ENCODE measurements at regions of chr6 and their contacts with region 1.

Region 1: GRCh38 chr6:4155848-4156466 is 20.6 kb upstream of the ECI2 start:
- DNase-seq: peak; percentile 75
- H3K4me3 Mint-ChIP-seq: no peak overlapping the region
- H3K27ac Mint-ChIP-seq: no peak overlapping the region
- H3K4me1 Mint-ChIP-seq: no peaks in the 10 kb centered on the region
- H3K27me3 Mint-ChIP-seq: peaks cover 26% of the 10 kb centered on the region
- CTCF ChIP-seq: no peak

Region 2: DNA sequence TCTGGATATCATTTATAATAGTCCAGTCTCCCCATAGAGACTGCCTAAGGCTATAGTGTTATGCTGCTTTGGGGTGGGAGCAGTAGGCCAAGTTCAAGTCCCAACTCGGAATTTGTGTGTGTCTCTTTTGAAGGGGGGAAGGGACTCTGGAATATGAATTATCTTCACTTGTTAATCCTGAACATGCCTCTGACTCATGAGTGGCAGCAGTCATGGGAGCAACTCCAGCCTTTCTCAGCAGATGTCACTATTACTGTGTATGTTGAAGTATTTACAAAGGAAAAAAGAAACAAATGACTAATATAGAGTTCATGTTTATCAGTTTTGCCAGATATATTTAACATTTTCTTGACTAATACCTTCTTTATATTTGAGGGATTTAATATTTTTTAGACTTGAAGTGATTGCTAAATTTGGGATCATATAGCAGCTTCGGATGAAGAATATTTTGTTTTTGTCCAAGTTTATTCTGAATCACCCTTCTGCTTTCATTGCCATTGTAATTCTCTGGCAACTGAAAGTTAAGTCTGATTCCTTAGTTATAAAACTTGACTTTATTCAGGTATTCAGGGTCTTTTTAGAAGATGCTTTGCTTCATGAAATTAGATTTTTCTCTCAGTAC is 100.4 kb before region 1 on chr6:
- CTCF ChIA-PET with region 1: interaction called, 4 read pairs
- intact Hi-C with region 1: loop called (anchors 1 kb)
- DNase-seq: peak; percentile 11
- H3K4me3 Mint-ChIP-seq: no peak overlapping the region
- H3K27ac Mint-ChIP-seq: no peak overlapping the region
- H3K4me1 Mint-ChIP-seq: peaks cover 9% of the 10 kb centered on the region
- H3K27me3 Mint-ChIP-seq: no peaks in the 10 kb centered on the region
- CTCF ChIP-seq: no peak

Region 3: DNA sequence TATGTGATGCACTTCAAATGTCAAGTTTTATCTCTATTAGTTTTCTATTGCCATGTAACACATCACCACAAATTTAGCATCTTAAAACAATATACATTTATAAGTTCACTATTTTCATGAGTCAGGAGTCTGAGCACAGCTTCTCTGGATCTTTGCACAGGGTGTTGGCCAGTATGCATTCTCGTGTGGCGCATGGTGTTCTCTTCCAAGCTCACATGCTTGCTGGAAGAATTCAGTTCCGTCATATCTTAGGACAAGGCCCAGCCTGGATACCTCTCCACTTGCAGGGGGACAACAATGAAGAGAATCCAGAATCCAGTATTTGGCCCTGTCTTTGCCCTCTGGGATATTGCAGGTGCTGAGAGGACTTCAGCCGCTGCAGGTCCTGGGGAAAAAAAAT is 30.4 kb after region 1 on chr6:
- CTCF ChIA-PET with region 1: no interaction called
- intact Hi-C with region 1: no loop called
- DNase-seq: no peak
- H3K4me3 Mint-ChIP-seq: no peak overlapping the region
- H3K27ac Mint-ChIP-seq: no peak overlapping the region
- H3K4me1 Mint-ChIP-seq: no peaks in the 10 kb centered on the region
- H3K27me3 Mint-ChIP-seq: peaks cover 14% of the 10 kb centered on the region
- CTCF ChIP-seq: no peak

Region 4: DNA sequence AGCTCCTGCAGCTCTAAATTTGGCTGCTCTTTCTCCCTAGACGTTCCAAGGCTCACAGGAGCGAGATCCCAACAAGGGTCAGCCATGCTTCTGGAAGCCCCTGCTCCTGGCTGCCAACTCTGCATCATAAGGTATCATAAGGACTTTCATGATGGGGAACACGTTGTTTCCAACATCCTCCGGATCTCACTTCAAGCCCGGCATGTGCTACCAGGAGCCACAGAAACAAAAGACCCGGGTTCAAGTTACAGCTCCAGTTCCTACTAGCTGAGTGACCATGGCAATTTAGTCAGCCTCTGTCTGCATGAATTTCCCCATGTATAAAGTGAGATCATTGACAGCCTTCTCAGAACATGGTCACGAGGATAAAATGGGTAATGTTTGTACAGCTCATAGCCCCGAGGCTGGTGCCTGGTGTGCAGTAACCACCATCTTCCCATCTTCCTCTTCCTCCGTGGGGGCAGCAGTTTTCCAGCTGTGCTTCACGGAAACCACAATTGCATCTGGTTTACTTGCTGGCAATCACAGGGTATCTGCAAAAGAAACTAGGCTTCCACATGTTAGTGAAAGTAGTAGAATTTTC is 188.5 kb after region 1 on chr6:
- CTCF ChIA-PET with region 1: no interaction called
- intact Hi-C with region 1: no loop called
- DNase-seq: no peak
- H3K4me3 Mint-ChIP-seq: no peak overlapping the region
- H3K27ac Mint-ChIP-seq: no peak overlapping the region
- H3K4me1 Mint-ChIP-seq: no peaks in the 10 kb centered on the region
- H3K27me3 Mint-ChIP-seq: peaks cover 33% of the 10 kb centered on the region
- CTCF ChIP-seq: no peak

Measured in Calu3 (cell line).